ENCODE measurements at regions of chr22 and their contacts with region 1.

Region 1: DNA sequence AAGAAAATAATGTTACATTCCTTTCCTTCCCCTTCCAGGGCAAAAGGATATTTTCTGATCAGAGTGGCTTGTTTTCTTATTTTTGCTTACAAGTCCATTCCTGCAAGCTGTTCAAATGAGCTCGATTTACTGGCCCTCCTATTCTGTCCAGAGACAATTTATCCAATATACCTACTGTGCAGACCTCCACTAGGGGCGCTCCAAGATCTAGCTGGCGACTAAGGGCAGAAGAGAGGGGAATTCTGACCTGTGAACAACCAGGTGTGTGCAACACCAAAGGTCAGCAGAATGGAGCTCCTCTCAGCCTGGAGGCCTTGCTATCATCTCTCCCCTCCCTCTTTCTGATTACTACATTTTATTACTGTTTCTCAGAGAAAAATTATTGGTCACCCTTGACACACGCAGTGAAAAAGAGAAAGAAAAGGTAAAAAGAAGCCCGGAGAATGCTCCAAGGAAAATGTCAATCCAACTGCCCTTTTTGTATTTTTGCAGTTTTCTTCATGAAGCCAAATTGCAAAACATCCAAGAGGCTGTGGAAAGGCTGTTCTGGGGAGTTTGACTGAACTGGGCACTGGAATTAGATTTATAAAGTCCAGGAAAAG is 3.2 kb downstream of the SEZ6L start:
- DNase-seq: peak; percentile 61
- H3K4me3 ChIP-seq: no peak overlapping the region; a peak in 1 of 4 replicates
- H3K27ac ChIP-seq: no peak overlapping the region; a peak in 1 of 4 replicates
- H3K4me1 ChIP-seq: peaks cover 0 to 23% of the 10 kb centered on the region in 2 experiments; a peak in 2 of 4 replicates
- H3K27me3 ChIP-seq: 0 out of 2 replicates have a peak, but pooled peaks cover 7% of the 10 kb centered on the region
- CTCF ChIP-seq: peak; percentile 68
- EP300 ChIP-seq: no peak
- RAD21 ChIP-seq: peak; percentile 64

Region 2: DNA sequence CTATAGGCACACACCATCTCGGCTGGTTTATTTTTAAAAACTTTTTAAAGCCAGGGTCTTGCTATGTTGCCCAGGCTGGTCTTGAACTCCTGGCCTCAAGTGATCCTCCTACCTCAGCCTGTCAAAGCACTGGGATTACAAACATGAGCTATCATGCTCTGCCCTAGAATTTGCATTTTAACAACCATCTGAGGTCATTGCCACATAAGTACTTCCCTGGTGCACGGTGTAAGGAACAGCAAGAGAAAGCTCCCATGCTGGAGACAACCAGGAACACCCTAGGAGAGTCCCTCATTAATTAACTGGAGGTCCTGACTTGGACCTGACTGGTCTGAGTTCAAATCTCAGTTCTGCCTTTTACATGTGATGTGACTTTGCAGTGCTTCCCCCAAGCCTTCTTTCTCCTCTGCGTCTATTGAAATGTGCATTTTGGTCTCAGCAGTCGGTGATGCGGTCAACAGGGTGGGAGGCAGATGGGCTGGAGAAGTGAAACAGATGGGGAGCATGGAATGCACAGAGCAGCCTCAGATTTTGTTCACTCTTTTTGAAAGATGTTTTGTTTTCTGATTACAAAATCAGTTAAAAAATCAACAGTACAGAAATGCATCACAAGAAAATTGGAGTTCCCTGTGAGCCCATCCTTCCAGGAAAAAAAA is 284.0 kb before region 1 on chr22:
- CTCF ChIA-PET with region 1: interaction called, 20 read pairs
- POLR2A ChIA-PET with region 1: interaction called, 3 read pairs
- DNase-seq: no peak
- H3K4me3 ChIP-seq: no peak overlapping the region
- H3K27ac ChIP-seq: no peak overlapping the region
- H3K4me1 ChIP-seq: no peaks in the 10 kb centered on the region; a peak in 1 of 4 replicates
- H3K27me3 ChIP-seq: no peaks in the 10 kb centered on the region
- CTCF ChIP-seq: no peak
- EP300 ChIP-seq: no peak
- RAD21 ChIP-seq: no peak

Region 3: DNA sequence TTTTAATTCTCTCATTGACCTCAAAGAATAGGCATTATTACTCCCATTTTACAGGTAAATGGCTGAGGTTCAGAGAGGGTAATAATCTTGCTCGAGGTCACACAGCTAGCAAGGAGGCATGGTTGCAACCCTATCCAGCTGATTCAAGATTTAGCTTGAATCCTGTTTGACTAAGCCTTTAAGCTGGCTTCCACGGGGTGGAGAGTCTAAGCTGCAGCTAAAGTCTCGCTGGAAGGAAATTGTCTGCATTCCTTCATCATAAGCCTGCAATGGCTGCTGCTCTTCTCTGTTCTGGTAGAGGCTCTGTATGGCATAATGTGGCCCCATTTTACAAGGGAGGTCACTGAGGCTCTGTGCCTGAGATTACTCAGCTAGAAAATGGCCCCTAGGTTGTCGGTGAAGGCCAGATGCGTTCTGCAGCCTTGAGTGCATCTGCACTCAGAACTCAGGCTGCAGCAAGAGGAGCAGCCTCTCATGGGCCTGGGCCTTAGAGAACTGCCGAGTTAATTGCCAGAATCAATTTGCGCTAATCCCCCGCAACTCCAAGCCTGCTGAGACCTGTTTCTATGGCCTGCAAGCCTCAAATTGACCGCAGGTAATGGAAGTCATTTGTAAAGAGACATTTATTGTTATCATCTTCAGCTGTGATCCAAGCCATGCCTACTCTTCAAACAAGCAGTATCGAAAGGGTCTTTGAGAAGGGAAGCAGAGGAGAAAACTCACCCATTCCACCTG is 47.3 kb before region 1 on chr22:
- CTCF ChIA-PET with region 1: interaction called, 10 read pairs
- POLR2A ChIA-PET with region 1: no interaction called
- DNase-seq: no peak
- H3K4me3 ChIP-seq: no peak overlapping the region
- H3K27ac ChIP-seq: no peak overlapping the region
- H3K4me1 ChIP-seq: peaks cover 0 to 4% of the 10 kb centered on the region in 2 experiments; a peak in 1 of 4 replicates
- H3K27me3 ChIP-seq: no peaks in the 10 kb centered on the region
- CTCF ChIP-seq: no peak
- EP300 ChIP-seq: no peak
- RAD21 ChIP-seq: no peak

Region 4: DNA sequence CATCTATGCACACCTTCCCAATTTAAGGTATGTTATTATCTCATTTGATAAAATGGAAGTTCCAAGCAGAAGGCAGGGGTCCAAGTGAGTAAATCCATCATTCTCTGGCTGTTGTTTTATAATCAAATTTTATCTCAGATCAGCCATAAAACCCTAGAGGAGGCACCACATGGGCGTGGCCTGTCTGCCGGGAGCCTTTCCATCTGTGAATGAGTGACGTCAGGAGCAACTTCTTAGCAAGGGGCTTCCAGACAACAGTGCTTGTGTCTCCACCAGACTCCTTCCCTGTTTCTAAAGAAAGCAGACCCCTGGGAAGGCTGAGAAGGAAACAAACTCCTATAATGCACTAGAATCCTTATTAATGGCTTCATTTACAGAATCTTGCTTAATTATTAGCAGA is 10.2 kb after region 1 on chr22:
- CTCF ChIA-PET with region 1: interaction called, 51 read pairs
- POLR2A ChIA-PET with region 1: no interaction called
- DNase-seq: peak; percentile 32
- H3K4me3 ChIP-seq: no peak overlapping the region
- H3K27ac ChIP-seq: no peak overlapping the region
- H3K4me1 ChIP-seq: no peaks in the 10 kb centered on the region; a peak in 1 of 4 replicates
- H3K27me3 ChIP-seq: no peaks in the 10 kb centered on the region
- CTCF ChIP-seq: no peak
- EP300 ChIP-seq: no peak
- RAD21 ChIP-seq: no peak

Region 5: GRCh38 chr22:26259519-26259918 is 87.0 kb after region 1 on chr22:
- CTCF ChIA-PET with region 1: interaction called, 13 read pairs
- POLR2A ChIA-PET with region 1: no interaction called
- DNase-seq: no peak
- H3K4me3 ChIP-seq: no peak overlapping the region
- H3K27ac ChIP-seq: no peak overlapping the region
- H3K4me1 ChIP-seq: no peaks in the 10 kb centered on the region
- H3K27me3 ChIP-seq: no peaks in the 10 kb centered on the region
- CTCF ChIP-seq: no peak
- EP300 ChIP-seq: no peak
- RAD21 ChIP-seq: no peak

Region 6: DNA sequence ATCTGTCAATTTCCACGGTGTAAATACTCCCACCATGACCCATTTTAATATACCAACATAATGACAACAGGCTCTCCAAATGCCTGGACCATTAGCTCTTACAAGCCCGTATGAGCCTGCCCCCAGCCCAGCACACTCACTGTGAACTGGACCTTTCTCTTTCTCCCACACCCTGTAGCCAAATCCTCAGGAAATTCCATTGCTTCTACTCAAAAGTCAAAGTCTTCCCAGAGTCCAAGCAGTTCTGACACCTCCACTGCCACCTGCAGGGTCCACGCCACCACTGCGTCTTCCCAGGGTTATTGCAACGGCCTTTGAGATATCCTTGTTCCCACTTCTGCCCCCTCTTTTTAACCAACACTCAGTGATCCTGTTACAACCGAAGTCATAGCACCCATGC is 146.5 kb after region 1 on chr22:
- CTCF ChIA-PET with region 1: interaction called, 133 read pairs
- POLR2A ChIA-PET with region 1: no interaction called
- DNase-seq: no peak
- H3K4me3 ChIP-seq: no peak overlapping the region; a peak in 1 of 4 replicates
- H3K27ac ChIP-seq: no peak overlapping the region
- H3K4me1 ChIP-seq: peaks cover 2 to 7% of the 10 kb centered on the region in 2 experiments; a peak in 2 of 4 replicates
- H3K27me3 ChIP-seq: no peaks in the 10 kb centered on the region
- CTCF ChIP-seq: no peak
- EP300 ChIP-seq: no peak
- RAD21 ChIP-seq: no peak

Region 7: GRCh38 chr22:26342745-26343410 is 170.4 kb after region 1 on chr22:
- CTCF ChIA-PET with region 1: interaction called, 30 read pairs
- POLR2A ChIA-PET with region 1: no interaction called
- DNase-seq: no peak
- H3K4me3 ChIP-seq: no peak overlapping the region
- H3K27ac ChIP-seq: no peak overlapping the region
- H3K4me1 ChIP-seq: no peaks in the 10 kb centered on the region
- H3K27me3 ChIP-seq: no peaks in the 10 kb centered on the region
- CTCF ChIP-seq: no peak
- EP300 ChIP-seq: no peak
- RAD21 ChIP-seq: no peak